Activated naive CD4-positive, alpha-beta T cell treated with anti-CD3 and anti-CD28 coated beads for 36 hours (primary cell): ENCODE measurements at regions of chr4 and their contacts with region 1.

Region 1: DNA sequence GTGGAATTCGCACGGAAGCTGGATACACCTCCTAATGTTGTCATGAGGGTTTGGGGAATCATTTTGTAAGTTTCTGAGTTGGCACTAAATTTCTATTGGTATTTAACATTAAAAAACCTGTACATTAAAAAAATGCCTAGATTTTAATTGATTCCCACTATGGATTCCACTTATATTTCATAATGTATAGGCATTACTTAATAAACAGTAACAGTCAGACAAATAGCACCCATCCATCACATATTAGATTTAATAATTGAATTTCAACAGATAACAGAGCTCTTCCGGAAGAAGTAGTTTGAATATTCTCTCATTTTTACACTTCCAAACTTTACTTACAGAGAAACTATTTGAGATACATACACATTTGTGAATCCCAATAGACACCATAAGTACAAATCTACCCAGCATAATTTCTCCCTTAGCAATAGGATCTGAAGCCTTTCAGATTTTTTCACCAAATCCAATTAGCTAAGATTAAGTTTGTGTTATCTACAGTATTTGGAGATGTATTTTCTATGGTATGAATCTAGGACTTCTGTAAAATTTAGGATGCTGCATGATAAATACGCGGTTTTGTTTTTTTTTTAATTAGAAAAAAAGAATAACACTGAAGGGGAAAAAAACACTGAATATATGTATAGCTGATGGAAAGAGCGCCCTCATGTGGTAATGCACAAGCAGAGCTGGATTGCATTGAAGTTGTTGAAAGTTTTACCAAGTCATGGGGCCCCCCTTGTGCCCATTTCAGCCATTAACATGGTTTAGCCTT is 12.2 kb upstream of the ODAM start:
- DNase-seq: peak; percentile 42
- H3K4me3 Mint-ChIP-seq: no peak overlapping the region
- H3K27ac Mint-ChIP-seq: no peak overlapping the region
- H3K4me1 Mint-ChIP-seq: no peaks in the 10 kb centered on the region
- H3K27me3 Mint-ChIP-seq: peaks cover 2% of the 10 kb centered on the region

Region 2: DNA sequence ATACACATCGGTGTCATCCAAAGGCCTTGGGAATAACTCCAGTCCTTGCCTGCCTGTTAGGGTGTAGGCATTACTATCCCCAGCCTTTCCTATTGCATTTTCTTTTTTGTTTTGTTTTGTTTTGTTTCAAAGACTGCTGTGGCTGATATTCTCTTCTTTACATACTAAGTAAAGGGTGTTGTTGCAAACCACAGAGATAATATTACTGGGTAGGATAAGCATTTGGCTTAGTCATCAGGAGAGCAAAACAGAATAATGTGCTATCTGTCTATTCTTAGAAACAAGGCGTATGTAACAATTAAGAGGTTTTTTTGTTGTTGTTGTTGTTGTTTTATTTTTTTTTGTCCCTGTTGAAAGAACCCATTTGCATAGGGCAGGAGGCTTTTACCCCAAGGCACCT is 861.3 kb before region 1 on chr4:
- CTCF ChIA-PET with region 1: no interaction called
- intact Hi-C with region 1: loop called (anchors 10 kb)
- DNase-seq: no peak
- H3K4me3 Mint-ChIP-seq: no peak overlapping the region
- H3K27ac Mint-ChIP-seq: no peak overlapping the region
- H3K4me1 Mint-ChIP-seq: no peaks in the 10 kb centered on the region
- H3K27me3 Mint-ChIP-seq: no peaks in the 10 kb centered on the region

Region 3: DNA sequence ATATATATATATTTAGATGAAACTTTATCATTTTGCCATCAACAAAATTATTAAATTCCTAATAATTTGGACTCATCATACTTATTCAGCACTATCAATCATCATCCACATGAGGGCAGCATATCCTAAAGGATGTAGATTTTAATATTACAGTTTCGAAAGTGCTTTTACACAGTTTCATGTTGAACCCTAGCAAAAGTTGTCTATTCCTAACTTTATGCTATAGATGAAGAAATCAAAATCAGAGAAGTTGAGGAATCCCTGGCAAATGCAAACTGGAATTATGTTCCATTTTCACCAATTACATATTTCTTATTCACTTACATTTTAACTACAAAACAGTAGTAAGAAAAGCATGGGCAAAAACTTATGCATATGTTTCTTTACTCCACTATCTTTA is 493.8 kb before region 1 on chr4:
- CTCF ChIA-PET with region 1: interaction called, 3 read pairs
- intact Hi-C with region 1: loop called (anchors 1 kb)
- DNase-seq: no peak
- H3K4me3 Mint-ChIP-seq: no peak overlapping the region
- H3K27ac Mint-ChIP-seq: no peak overlapping the region
- H3K4me1 Mint-ChIP-seq: peaks cover 3% of the 10 kb centered on the region
- H3K27me3 Mint-ChIP-seq: no peaks in the 10 kb centered on the region

Region 4: DNA sequence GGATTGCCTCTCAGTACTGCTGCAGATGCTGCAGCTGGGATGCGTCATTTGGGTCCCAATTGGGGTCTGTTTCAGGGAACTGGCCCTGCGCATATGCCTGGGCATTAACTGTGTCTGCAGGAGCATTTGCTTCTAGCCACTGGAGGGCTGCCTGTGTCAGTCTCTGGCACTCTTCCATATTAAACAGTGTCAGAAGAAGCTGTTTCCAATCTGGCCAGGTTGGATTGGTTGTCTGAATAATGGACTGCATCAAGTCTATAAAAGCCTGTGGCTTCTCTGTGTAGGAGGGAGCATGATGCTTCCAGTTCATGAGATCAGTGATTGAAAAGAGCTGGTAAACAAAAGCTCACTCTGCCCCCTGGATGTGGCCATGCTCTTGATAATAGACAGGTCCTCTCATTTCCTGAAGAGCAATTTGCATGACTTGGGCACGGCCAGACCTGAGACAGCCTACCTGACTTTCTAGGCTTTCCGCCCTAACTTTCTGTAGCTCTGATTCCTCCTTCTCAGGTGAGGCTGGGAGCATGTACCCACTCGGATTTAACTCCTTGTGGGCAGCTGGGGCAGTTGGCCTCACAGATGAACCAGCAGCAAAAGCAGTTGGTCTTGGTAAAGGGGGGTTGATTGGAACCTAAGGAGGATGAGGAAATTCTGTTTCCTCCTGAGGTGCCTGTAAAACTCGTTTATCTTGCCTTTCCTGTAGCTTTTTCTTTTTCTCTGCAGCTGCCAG is 352.6 kb before region 1 on chr4:
- CTCF ChIA-PET with region 1: no interaction called
- intact Hi-C with region 1: loop called (anchors 5 kb)
- DNase-seq: peak; percentile 25
- H3K4me3 Mint-ChIP-seq: no peak overlapping the region
- H3K27ac Mint-ChIP-seq: no peak overlapping the region
- H3K4me1 Mint-ChIP-seq: peaks cover 7% of the 10 kb centered on the region
- H3K27me3 Mint-ChIP-seq: no peaks in the 10 kb centered on the region

Region 5: DNA sequence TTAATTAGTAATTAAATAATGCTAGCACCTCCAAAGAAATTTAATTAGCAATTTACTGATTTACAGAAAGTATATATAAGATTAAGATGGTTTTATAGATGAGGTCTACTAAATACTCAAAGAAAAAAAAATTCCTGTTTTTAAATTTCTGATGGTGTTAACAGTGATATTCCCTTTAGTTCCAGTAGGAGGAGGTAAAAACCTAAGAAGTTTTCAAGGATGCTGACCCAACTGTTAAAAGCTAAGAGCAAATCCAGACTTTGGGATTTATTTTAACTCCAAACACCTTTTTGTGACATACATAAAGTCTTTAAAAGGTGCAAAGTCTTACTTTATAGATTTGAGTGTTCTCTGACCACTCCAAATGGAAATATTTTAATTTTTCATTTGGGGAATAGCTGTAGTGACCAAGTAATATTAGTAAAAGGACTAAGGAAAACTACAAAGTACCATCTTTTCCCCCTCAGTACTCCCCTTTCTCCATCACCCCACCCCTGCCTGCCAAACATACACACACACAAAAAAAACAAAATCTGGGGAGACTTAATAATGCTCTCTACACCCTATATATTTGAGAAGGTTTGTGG is 286.7 kb before region 1 on chr4:
- CTCF ChIA-PET with region 1: no interaction called
- intact Hi-C with region 1: loop called (anchors 1 kb)
- DNase-seq: no peak
- H3K4me3 Mint-ChIP-seq: no peak overlapping the region
- H3K27ac Mint-ChIP-seq: no peak overlapping the region
- H3K4me1 Mint-ChIP-seq: no peaks in the 10 kb centered on the region
- H3K27me3 Mint-ChIP-seq: peaks cover 22% of the 10 kb centered on the region

Region 6: GRCh38 chr4:70505151-70505748 is 321.9 kb after region 1 on chr4:
- CTCF ChIA-PET with region 1: interaction called, 4 read pairs
- intact Hi-C with region 1: loop called (anchors 5 kb)
- DNase-seq: peak; percentile 64
- H3K4me3 Mint-ChIP-seq: no peak overlapping the region
- H3K27ac Mint-ChIP-seq: no peak overlapping the region
- H3K4me1 Mint-ChIP-seq: no peaks in the 10 kb centered on the region
- H3K27me3 Mint-ChIP-seq: no peaks in the 10 kb centered on the region

Region 7: GRCh38 chr4:70559211-70559830 is 376.0 kb after region 1 on chr4:
- CTCF ChIA-PET with region 1: no interaction called
- intact Hi-C with region 1: loop called (anchors 1 kb)
- DNase-seq: peak; percentile 73
- H3K4me3 Mint-ChIP-seq: no peak overlapping the region
- H3K27ac Mint-ChIP-seq: no peak overlapping the region
- H3K4me1 Mint-ChIP-seq: peaks cover 9% of the 10 kb centered on the region
- H3K27me3 Mint-ChIP-seq: no peaks in the 10 kb centered on the region